ENCODE measurements at regions of chr2 and their contacts with region 1.

Region 1: DNA sequence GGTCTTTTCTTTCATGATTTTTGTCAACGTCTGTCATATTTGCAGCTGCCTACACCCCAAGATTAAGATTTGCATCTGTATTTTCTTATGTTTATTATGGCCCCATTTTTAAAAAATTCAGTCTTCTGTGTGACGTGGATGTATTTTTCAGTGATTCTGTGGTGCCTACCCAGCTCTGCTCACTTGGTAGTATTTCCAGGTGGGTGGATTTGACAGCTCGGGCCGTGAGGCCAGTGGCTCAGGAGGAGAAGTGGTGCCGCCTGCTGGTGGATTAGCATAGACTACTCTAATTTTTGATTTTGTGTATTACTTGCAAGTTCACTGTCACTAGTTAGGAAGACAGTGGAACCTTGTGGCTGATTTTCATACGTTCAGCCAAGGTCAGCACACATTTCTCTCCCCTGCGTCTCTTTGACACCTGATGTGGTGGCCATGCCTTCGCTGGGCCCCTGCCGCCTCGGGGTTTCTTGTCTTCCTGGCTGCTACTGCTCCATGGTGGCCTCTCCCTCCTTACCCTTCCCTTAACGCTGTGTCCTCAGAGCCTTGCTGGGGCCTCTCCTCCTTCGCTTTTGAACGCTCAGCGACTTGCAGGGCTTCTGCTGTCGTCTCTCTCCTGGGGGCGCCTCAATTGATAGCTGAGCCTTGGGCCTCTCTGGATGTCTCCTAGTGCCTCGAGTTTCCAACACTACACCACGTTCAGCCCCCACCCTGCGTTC is 89.3 kb downstream of the DGKD start:
- DNase-seq: peak; percentile 71 to 91 (median 84)
- H3K4me3 ChIP-seq: no peak overlapping the region
- H3K27ac ChIP-seq: peak overlapping the region in 1 of 5 donors; percentile 1
- H3K4me1 ChIP-seq: peaks cover 0 to 5% of the 10 kb centered on the region in 2 donors
- H3K27me3 ChIP-seq: no peaks in the 10 kb centered on the region
- CTCF ChIP-seq: peak; percentile 83 to 91 (median 86)
- POLR2A ChIP-seq: no peak

Region 2: GRCh38 chr2:232611551-232612218 is 831.9 kb before region 1 on chr2:
- intact Hi-C with region 1: no loop called
- DNase-seq: peak; percentile 37 to 81 (median 66)
- H3K4me3 ChIP-seq: no peak overlapping the region
- H3K27ac ChIP-seq: no peak overlapping the region
- H3K4me1 ChIP-seq: no peaks in the 10 kb centered on the region
- H3K27me3 ChIP-seq: no peaks in the 10 kb centered on the region
- CTCF ChIP-seq: peak; percentile 58 to 80 (median 78)
- POLR2A ChIP-seq: no peak

Region 3: GRCh38 chr2:233353769-233354499 is 89.7 kb before region 1 on chr2 and contains the start of gene DGKD:
- intact Hi-C with region 1: loop called (anchors 5 kb)
- DNase-seq: peak; percentile 36 to 68 (median 50)
- H3K4me3 ChIP-seq: peak within 1 kb of the TSS in 3 of 4 donors; percentile 14 to 85 (median 38)
- H3K27ac ChIP-seq: peak within 1 kb of the TSS in 2 of 5 donors; percentile 34 to 69
- H3K4me1 ChIP-seq: peaks cover 11 to 37% of the 10 kb centered on the region in 2 donors
- H3K27me3 ChIP-seq: no peaks in the 10 kb centered on the region
- CTCF ChIP-seq: peak in 4 of 6 experiments; percentile 11 to 25 (median 19)
- POLR2A ChIP-seq: no peak
- total RNA-seq, gene DGKD: 8.8 to 25.2 (median 16.2) TPM

Region 4: DNA sequence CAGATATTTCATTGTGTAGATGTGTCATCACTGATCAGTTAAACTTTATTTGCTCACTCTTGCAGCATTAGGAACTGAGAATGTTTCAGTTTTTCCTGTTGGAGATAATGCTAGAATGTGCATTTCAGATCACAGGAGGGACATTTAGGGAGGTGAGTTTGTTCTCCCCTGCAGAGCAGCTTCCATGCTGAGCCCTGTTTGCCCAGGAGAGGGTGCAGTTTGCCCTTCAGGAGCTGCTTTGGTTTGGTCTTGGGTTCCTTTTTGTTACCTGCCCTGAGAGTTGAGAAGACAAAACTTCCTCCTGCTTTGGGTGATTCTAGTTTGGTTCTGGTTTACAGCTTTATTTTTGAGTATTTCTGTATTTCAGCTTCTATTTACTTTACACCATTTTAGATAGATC is 39.4 kb before region 1 on chr2:
- intact Hi-C with region 1: loop called in 1 of 2 experiments (anchors 5 kb)
- DNase-seq: peak in 3 of 7 donors; percentile 28 to 48 (median 28)
- H3K4me3 ChIP-seq: no peak overlapping the region
- H3K27ac ChIP-seq: no peak overlapping the region
- H3K4me1 ChIP-seq: peaks cover 0 to 4% of the 10 kb centered on the region in 2 donors
- H3K27me3 ChIP-seq: no peaks in the 10 kb centered on the region
- CTCF ChIP-seq: peak; percentile 14 to 60 (median 48)
- POLR2A ChIP-seq: no peak

Region 5: GRCh38 chr2:233711312-233712008 is 267.8 kb after region 1 on chr2:
- intact Hi-C with region 1: loop called (anchors 10 kb)
- DNase-seq: peak; percentile 83 to 91 (median 90)
- H3K4me3 ChIP-seq: no peak overlapping the region
- H3K27ac ChIP-seq: no peak overlapping the region
- H3K4me1 ChIP-seq: no peaks in the 10 kb centered on the region
- H3K27me3 ChIP-seq: peaks cover 25% of the 10 kb centered on the region
- CTCF ChIP-seq: peak; percentile 82 to 95 (median 84)
- POLR2A ChIP-seq: no peak

Measured in adrenal gland (tissue), 19 donors.